Kidney (tissue), 22 donors: ENCODE measurements at regions of chr3 and their contacts with region 1.

Region 1: GRCh38 chr3:124995460-124995994 is 60.3 kb downstream of the HEG1 start:
- DNase-seq: peak in 4 of 5 donors; percentile 59 to 85 (median 76)
- H3K4me3 ChIP-seq: no peak overlapping the region
- H3K27ac ChIP-seq: peak overlapping the region; percentile 26 to 29
- H3K4me1 ChIP-seq: peaks cover 0 to 21% (median 15%) of the 10 kb centered on the region in 3 donors
- H3K27me3 ChIP-seq: no peaks in the 10 kb centered on the region
- CTCF ChIP-seq: peak; percentile 77

Region 2: GRCh38 chr3:124707656-124708062 is 287.9 kb before region 1 on chr3:
- intact Hi-C with region 1: no loop called
- DNase-seq: no peak
- H3K4me3 ChIP-seq: no peak overlapping the region
- H3K27ac ChIP-seq: no peak overlapping the region
- H3K4me1 ChIP-seq: no peaks in the 10 kb centered on the region
- H3K27me3 ChIP-seq: no peaks in the 10 kb centered on the region
- CTCF ChIP-seq: no peak

Region 3: GRCh38 chr3:124887177-124887931 is 108.2 kb before region 1 on chr3 and contains the start of gene ITGB5:
- intact Hi-C with region 1: no loop called
- DNase-seq: peak; percentile 90 to 94 (median 92)
- H3K4me3 ChIP-seq: peak within 1 kb of the TSS; percentile 48 to 79 (median 50)
- H3K27ac ChIP-seq: peak within 1 kb of the TSS; percentile 87 to 90
- H3K4me1 ChIP-seq: peaks cover 0 to 5% (median 2%) of the 10 kb centered on the region in 3 donors
- H3K27me3 ChIP-seq: no peaks in the 10 kb centered on the region
- CTCF ChIP-seq: no peak
- total RNA-seq, gene ITGB5: 115 TPM

Region 4: DNA sequence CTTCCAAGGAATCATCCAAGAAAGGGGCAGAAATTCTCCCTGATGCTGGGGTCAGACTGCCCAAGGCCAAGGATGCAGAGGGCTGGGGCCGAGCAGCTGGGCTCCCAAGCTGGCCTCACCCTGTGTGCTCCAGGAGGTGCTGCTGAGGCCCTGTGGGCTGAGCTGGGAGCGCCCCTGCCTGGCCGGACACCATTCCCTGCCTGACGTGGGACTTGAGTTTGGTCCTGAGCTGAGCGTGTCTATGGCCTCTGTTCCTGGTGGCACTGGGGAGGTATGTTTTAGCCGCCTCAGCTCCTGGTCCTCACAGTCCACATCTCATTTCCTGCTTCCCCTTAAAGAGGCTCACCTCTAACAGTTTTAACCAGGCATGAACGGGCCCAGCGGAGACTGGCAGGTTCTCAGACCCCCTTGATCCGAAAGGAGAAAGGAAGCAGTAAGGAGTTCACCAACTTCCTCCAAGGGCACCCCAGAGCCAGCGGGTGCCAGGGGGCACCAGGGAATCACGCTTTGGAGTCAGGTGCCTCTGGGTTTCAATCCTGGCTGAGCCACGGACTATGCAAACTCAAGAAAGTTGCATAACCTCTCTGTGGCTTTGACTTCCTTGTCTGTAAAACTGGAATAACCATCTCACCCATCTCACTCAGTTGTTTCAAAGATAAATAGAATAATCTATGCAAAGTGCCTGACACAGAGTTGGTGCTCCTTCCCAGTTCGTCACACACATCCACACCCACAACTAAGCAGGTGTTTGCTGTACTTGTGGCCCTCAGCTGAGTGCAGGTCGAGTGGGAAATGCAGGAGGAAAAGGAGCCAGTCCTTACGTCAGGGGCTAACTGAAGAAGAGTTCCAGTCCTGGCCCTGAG is 168.4 kb after region 1 on chr3:
- intact Hi-C with region 1: loop called (anchors 5 kb)
- DNase-seq: no peak
- H3K4me3 ChIP-seq: no peak overlapping the region
- H3K27ac ChIP-seq: no peak overlapping the region
- H3K4me1 ChIP-seq: peaks cover 0 to 8% (median 6%) of the 10 kb centered on the region in 3 donors
- H3K27me3 ChIP-seq: no peaks in the 10 kb centered on the region
- CTCF ChIP-seq: no peak

Region 5: DNA sequence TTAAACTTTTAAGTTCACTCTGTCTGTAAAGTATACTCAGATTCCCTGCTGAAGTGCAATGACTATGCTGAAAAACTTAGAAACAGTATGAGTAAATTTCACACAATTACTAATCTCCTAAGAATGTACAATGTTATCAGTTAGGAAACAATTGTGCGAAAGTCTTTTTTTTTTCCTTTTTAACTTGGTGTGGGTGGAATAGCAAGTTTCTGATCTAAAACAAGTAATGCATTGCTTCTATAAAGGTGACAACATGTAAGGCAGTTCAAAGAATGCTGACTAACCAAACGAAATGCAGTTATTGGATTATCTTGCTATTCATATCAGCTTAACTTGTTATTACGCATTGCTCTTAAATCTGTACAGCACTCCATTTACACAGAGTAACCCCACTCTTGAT is 236.4 kb after region 1 on chr3:
- intact Hi-C with region 1: no loop called
- DNase-seq: no peak
- H3K4me3 ChIP-seq: no peak overlapping the region
- H3K27ac ChIP-seq: no peak overlapping the region
- H3K4me1 ChIP-seq: no peaks in the 10 kb centered on the region
- H3K27me3 ChIP-seq: no peaks in the 10 kb centered on the region
- CTCF ChIP-seq: no peak

Region 6: GRCh38 chr3:125437631-125438435 is 442.3 kb after region 1 on chr3:
- intact Hi-C with region 1: loop called (anchors 10 kb)
- DNase-seq: peak in 4 of 5 donors; percentile 41 to 66 (median 59)
- H3K4me3 ChIP-seq: peak overlapping the region in 1 of 3 donors; percentile 12
- H3K27ac ChIP-seq: no peak overlapping the region
- H3K4me1 ChIP-seq: no peaks in the 10 kb centered on the region
- H3K27me3 ChIP-seq: no peaks in the 10 kb centered on the region
- CTCF ChIP-seq: peak; percentile 87